GM10248 (cell line): ENCODE measurements at regions of chr17 and their contacts with region 1.

Region 1: GRCh38 chr17:44210342-44211192 is 8.9 kb downstream of the UBTF start:
- DNase-seq: peak; percentile 91
- CTCF ChIP-seq: peak; percentile 100

Region 2: DNA sequence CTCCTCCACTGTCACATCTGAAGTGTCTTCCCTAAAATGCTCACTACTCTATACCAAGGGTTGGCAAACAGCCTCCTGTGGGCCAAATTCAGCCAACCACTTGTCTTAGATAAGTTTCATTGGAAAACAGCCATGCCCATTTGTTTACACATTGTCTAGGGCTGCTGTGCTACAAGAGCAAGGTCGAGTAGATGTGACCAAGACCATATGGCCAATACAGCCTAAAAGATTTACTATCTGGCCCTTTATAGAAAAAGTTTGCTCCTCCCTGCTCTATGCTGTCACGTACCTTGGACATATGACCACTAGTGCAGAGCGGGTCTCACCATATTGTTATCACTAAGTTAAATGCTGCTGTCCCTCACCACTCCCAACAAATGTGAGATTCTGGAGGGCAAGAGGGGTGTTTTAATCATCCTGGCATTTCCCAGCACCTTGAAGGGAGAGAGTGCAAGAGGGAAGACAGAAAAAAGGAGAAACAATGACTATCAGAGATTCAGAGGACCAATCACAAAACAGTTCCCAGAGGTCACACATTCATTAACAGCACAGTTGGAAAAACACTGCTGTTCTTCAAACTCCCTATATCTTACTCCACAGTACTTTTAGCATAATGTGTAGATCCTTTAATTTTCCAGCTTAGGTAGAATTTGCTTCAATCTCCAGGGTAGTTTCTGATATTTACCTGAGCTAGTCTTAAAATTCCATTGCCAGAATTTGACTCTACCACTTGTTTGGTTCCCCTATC is 157.3 kb before region 1 on chr17:
- CTCF ChIA-PET with region 1: no interaction called
- POLR2A ChIA-PET with region 1: no interaction called
- DNase-seq: no peak
- CTCF ChIP-seq: no peak

Region 3: GRCh38 chr17:44186307-44187130 is 24.0 kb before region 1 on chr17 and contains the start of gene TMUB2:
- CTCF ChIA-PET with region 1: interaction called, 13 read pairs
- POLR2A ChIA-PET with region 1: interaction called, 3 read pairs
- DNase-seq: peak; percentile 100
- CTCF ChIP-seq: no peak

Region 4: GRCh38 chr17:44279666-44280391 is 69.3 kb after region 1 on chr17:
- CTCF ChIA-PET with region 1: interaction called, 27 read pairs
- POLR2A ChIA-PET with region 1: no interaction called
- DNase-seq: peak; percentile 86
- CTCF ChIP-seq: no peak

Region 5: DNA sequence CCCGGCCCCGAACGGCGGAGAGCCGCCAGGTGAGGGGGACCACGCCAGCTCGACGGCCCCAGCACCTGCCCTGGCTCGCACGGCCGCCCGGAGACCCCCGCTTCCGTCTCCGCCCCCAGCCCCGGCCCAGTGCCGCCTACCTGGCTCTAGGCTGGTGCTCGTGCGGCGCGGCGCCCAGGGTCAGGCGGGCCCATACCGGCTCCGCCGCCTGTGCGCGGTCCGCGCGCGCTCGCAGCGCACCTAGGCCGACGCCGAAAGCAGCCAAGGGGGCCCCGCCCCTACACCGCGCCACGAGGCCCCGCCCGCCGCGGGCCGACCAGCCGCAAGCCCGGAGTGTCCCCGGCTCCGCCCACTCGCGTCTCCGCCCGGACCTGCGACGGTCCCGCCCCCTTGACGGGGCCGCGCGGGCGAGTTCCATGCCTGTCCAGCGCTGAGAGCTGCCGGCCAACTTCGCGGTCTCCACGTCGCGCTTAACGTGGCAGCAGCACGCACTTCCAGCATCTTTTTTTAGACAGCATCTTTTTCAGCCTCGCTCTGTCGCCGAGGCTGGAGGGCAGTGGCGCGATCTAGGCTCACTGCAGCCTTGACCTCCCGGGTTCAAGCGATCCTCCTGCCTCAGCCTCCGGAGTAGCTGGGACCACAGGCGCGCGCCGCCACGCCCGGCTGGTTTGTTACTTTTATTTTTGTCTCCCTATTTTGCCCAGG is 114.2 kb after region 1 on chr17 and contains the start of gene SLC25A39:
- CTCF ChIA-PET with region 1: interaction called, 234 read pairs
- POLR2A ChIA-PET with region 1: interaction called, 5 read pairs
- DNase-seq: peak; percentile 94
- CTCF ChIP-seq: no peak

Region 6: GRCh38 chr17:44350733-44351226 is 140.2 kb after region 1 on chr17:
- CTCF ChIA-PET with region 1: interaction called, 107 read pairs
- POLR2A ChIA-PET with region 1: no interaction called
- DNase-seq: peak; percentile 84
- CTCF ChIP-seq: peak; percentile 87

Region 7: DNA sequence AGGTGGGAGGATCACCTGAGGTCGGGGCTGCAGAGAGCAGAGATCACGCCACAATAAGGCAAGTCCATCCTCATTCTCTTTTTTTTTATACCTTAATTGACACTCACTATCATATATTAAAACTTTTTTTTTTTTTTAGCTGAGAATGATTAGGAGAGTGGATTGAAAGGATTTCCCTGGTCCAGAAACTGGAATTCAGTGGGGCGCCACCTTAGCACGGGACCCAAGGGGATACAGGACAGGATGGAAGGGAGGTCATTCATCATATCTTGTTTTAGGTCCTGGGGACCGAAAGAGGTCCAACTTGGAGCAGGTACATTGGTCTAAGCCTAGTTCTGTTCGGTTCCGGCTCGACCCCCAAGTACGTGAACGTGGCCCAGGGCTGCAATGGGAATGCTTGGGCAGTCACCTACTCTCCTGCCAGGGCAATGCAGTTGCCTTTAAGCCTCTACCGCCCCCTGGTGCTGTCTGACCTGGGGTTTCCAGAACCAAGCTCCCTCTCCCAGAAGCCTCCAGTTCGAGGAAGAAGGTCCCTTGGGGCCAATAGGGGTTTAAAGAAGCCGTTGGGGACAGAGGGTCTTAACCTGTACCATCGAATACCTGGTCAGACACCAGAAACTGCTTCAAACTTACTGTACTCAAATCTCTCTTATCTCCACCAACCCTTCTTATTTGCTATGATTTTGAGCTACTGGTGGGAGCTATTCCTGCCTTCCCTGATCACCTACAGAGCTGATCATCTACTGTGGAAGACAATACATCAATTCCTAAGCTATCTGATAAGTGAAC is 312.5 kb after region 1 on chr17:
- CTCF ChIA-PET with region 1: interaction called, 17 read pairs
- POLR2A ChIA-PET with region 1: no interaction called
- DNase-seq: peak; percentile 76
- CTCF ChIP-seq: peak; percentile 73